A673 (cell line): ENCODE measurements at regions of chr2 and their contacts with region 1.

Region 1: GRCh38 chr2:174473796-174474195 is 13.0 kb downstream of the GPR155 start:
- DNase-seq: no peak
- H3K4me3 ChIP-seq: no peak overlapping the region
- H3K27ac ChIP-seq: no peak overlapping the region
- H3K4me1 ChIP-seq: no peaks in the 10 kb centered on the region
- H3K27me3 ChIP-seq: peaks cover 95% of the 10 kb centered on the region
- CTCF ChIP-seq: no peak

Region 2: GRCh38 chr2:174326161-174327020 is 147.4 kb before region 1 on chr2:
- CTCF ChIA-PET with region 1: no interaction called
- POLR2A ChIA-PET with region 1: no interaction called
- intact Hi-C with region 1: no loop called
- DNase-seq: no peak
- H3K4me3 ChIP-seq: peak overlapping the region; percentile 42
- H3K27ac ChIP-seq: no peak overlapping the region
- H3K4me1 ChIP-seq: peaks cover 11% of the 10 kb centered on the region
- H3K27me3 ChIP-seq: peaks cover 66% of the 10 kb centered on the region
- CTCF ChIP-seq: no peak

Region 3: DNA sequence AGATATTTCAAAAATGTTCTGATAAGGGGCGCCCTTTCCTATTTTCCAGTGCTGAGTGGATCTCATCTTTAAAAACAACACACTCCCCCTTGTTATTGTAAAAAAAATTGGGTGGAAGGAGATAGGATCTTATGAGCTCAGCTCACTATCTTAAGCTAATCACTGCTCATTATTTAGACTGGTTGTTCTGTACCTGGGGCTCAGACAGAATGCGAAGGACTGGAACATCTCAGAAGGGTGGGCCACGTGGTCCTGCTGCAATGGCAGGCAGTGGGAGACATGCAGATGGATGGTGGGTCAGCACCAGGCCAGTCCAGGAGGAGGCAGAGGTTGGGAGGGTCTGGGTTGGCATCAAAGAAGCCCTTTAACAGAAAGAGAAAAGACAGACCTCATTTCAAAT is 61.3 kb after region 1 on chr2:
- CTCF ChIA-PET with region 1: interaction called, 13 read pairs
- POLR2A ChIA-PET with region 1: no interaction called
- intact Hi-C with region 1: no loop called
- DNase-seq: no peak
- H3K4me3 ChIP-seq: no peak overlapping the region
- H3K27ac ChIP-seq: no peak overlapping the region
- H3K4me1 ChIP-seq: no peaks in the 10 kb centered on the region
- H3K27me3 ChIP-seq: no peaks in the 10 kb centered on the region
- CTCF ChIP-seq: no peak

Region 4: GRCh38 chr2:174797781-174798276 is 324.0 kb after region 1 on chr2:
- CTCF ChIA-PET with region 1: no interaction called
- POLR2A ChIA-PET with region 1: no interaction called
- intact Hi-C with region 1: no loop called
- DNase-seq: no peak
- H3K4me3 ChIP-seq: no peak overlapping the region
- H3K27ac ChIP-seq: no peak overlapping the region
- H3K4me1 ChIP-seq: no peaks in the 10 kb centered on the region
- H3K27me3 ChIP-seq: no peaks in the 10 kb centered on the region
- CTCF ChIP-seq: no peak

Region 5: GRCh38 chr2:174925046-174925784 is 451.4 kb after region 1 on chr2:
- CTCF ChIA-PET with region 1: no interaction called
- POLR2A ChIA-PET with region 1: no interaction called
- intact Hi-C with region 1: no loop called
- DNase-seq: no peak
- H3K4me3 ChIP-seq: no peak overlapping the region
- H3K27ac ChIP-seq: no peak overlapping the region
- H3K4me1 ChIP-seq: no peaks in the 10 kb centered on the region
- H3K27me3 ChIP-seq: no peaks in the 10 kb centered on the region
- CTCF ChIP-seq: no peak